Brain microvascular endothelial cell (primary cell): ENCODE measurements at regions of chr3 and their contacts with region 1.

Region 1: GRCh38 chr3:190696777-190697501 is 165.6 kb downstream of the GMNC start:
- DNase-seq: no peak
- H3K4me3 ChIP-seq: no peak overlapping the region
- H3K27ac ChIP-seq: no peak overlapping the region
- H3K27me3 ChIP-seq: no peaks in the 10 kb centered on the region
- CTCF ChIP-seq: peak; percentile 62

Region 2: GRCh38 chr3:189961525-189962161 is 735.3 kb before region 1 on chr3:
- in situ Hi-C with region 1: loop called (anchors 25 kb)
- DNase-seq: peak; percentile 86
- H3K4me3 ChIP-seq: no peak overlapping the region
- H3K27ac ChIP-seq: no peak overlapping the region
- H3K27me3 ChIP-seq: no peaks in the 10 kb centered on the region
- CTCF ChIP-seq: peak; percentile 91

Region 3: GRCh38 chr3:190786898-190787297 is 90.0 kb after region 1 on chr3:
- in situ Hi-C with region 1: no loop called
- DNase-seq: no peak
- H3K4me3 ChIP-seq: no peak overlapping the region
- H3K27ac ChIP-seq: no peak overlapping the region
- H3K27me3 ChIP-seq: no peaks in the 10 kb centered on the region
- CTCF ChIP-seq: no peak